ENCODE measurements at regions of chr6 and their contacts with region 1.

Region 1: GRCh38 chr6:158605266-158605878 is 39.2 kb downstream of the DYNLT1 start:
- DNase-seq: peak; percentile 29
- H3K4me3 ChIP-seq: no peak overlapping the region
- CTCF ChIP-seq: peak; percentile 73

Region 2: DNA sequence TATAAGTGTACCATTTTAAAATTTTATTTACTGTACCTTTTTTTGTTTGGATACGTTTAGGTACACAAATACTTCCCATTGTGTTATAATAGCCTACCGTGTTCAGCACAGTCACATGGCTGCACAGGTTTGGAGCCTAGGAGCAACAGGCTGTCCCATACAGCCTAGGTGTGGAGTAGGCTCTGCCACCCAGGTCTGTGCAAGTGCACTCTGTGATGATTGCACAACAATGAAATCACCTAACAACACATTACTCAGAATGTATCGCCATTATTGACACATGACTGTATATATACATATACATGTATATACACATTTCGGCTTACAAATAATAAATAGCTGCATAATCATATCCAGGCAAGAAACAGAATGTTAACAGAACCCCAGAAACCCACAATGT is 452.7 kb before region 1 on chr6:
- CTCF ChIA-PET with region 1: no interaction called
- POLR2A ChIA-PET with region 1: no interaction called
- DNase-seq: no peak
- H3K4me3 ChIP-seq: no peak overlapping the region
- CTCF ChIP-seq: no peak

Region 3: GRCh38 chr6:158213925-158214674 is 391.3 kb before region 1 on chr6:
- CTCF ChIA-PET with region 1: interaction called, 257 read pairs
- POLR2A ChIA-PET with region 1: interaction called, 3 read pairs
- DNase-seq: no peak
- H3K4me3 ChIP-seq: no peak overlapping the region
- CTCF ChIP-seq: peak; percentile 70

Region 4: GRCh38 chr6:158536084-158536890 is 69.1 kb before region 1 on chr6:
- CTCF ChIA-PET with region 1: no interaction called
- POLR2A ChIA-PET with region 1: no interaction called
- DNase-seq: no peak
- H3K4me3 ChIP-seq: peak overlapping the region; percentile 53
- CTCF ChIP-seq: no peak

Region 5: GRCh38 chr6:158559895-158560835 is 45.2 kb before region 1 on chr6 and contains the start of gene TMEM181:
- CTCF ChIA-PET with region 1: interaction called, 16 read pairs
- POLR2A ChIA-PET with region 1: no interaction called
- DNase-seq: peak; percentile 21
- H3K4me3 ChIP-seq: peak within 1 kb of the TSS; percentile 79
- CTCF ChIP-seq: peak; percentile 15

Region 6: GRCh38 chr6:158565482-158566040 is 39.8 kb before region 1 on chr6:
- CTCF ChIA-PET with region 1: interaction called, 16 read pairs
- POLR2A ChIA-PET with region 1: no interaction called
- DNase-seq: no peak
- H3K4me3 ChIP-seq: no peak overlapping the region
- CTCF ChIP-seq: no peak

Region 7: DNA sequence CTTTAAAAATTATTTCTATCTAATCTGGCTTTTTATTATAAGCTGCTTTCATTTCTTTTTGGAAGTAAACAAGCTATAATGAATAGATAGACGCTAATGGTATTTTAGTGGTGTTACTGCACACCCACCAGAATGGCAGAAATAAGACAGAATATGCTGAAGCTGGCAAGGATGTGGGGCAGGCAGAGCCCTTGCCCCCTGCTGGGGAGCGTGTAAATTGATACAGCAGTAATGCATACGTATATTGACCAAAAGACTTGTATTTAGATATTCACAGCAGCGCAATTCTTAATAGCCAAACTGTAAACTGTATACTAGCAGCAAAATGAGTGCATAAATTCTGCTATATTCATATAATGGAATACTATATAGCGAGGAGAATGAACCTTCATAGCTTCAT is 10.1 kb before region 1 on chr6:
- CTCF ChIA-PET with region 1: interaction called, 92 read pairs
- POLR2A ChIA-PET with region 1: no interaction called
- DNase-seq: no peak
- H3K4me3 ChIP-seq: no peak overlapping the region
- CTCF ChIP-seq: peak; percentile 13

Region 8: GRCh38 chr6:158621694-158622544 is 16.5 kb after region 1 on chr6:
- CTCF ChIA-PET with region 1: interaction called, 53 read pairs
- POLR2A ChIA-PET with region 1: no interaction called
- DNase-seq: no peak
- H3K4me3 ChIP-seq: no peak overlapping the region
- CTCF ChIP-seq: no peak

Region 9: DNA sequence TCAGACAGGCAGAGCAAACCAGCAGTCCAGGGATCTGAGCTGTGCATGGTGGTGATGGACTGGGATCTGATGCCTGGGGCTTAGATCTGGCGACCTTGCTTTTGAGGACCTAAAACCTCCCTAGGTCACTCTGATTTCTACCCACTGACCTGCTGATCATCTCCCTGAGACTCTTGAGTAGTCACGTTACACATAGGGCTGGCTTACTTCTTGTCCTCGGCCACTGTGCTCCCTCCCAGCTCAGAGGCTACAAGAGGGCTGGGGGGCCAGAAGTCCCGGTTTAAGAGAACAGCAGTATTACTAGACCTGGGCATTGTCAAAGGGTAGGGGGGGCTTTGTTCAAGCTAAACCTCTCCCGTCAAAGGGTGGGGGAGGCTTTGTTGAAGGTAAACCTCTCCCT is 33.7 kb after region 1 on chr6:
- CTCF ChIA-PET with region 1: interaction called, 16 read pairs
- POLR2A ChIA-PET with region 1: no interaction called
- DNase-seq: no peak
- H3K4me3 ChIP-seq: no peak overlapping the region
- CTCF ChIP-seq: no peak

Measured in AG04449 (cell line).